CD4-positive, alpha-beta T cell (primary cell): ENCODE measurements at regions of chr22 and their contacts with region 1.

Region 1: DNA sequence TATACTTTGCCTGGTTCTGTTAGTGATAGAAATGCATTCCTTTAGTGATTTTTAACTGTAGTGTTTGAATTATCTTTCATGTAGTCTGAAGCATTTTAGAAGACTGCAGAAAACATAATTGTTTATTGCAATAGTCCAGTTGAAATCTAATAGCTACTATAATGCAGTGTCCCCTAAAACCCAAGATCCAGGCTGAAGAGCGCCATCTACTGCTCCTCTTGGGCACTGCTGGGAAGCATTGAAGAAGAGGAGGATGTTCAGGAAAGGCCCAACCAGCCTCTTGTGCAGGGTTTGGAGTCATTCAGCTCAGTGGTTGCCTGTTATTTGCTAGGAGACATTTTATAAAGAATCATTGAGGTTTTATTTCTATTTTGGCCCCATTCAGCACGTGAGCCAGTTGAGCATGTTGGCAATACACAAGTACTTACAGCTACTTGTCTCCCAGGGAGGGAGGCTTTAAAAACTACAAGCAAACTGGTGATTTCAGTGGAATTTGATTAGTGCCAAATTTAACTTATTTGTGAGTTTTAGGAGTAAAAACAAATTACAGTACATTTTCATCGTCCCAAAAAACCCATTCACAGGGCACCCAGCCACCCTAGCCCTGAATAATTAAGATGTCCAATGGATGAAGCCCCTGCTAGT is 74.9 kb upstream of the HORMAD2 start:
- DNase-seq: peak; percentile 29 to 73 (median 54)
- ATAC-seq: peak; percentile 72
- H3K4me3 ChIP-seq: no peak overlapping the region
- H3K4me3 Mint-ChIP-seq: no peak overlapping the region
- H3K27ac ChIP-seq: no peak overlapping the region
- H3K27ac Mint-ChIP-seq: peak overlapping the region; percentile 6
- H3K4me1 ChIP-seq: no peaks in the 10 kb centered on the region
- H3K4me1 Mint-ChIP-seq: peaks cover 8% of the 10 kb centered on the region
- H3K27me3 ChIP-seq: no peaks in the 10 kb centered on the region
- H3K27me3 Mint-ChIP-seq: no peaks in the 10 kb centered on the region
- CTCF ChIP-seq: peak; percentile 99

Region 2: GRCh38 chr22:29394931-29395581 is 610.3 kb before region 1 on chr22:
- CTCF ChIA-PET with region 1: no interaction called
- POLR2A ChIA-PET with region 1: no interaction called
- intact Hi-C with region 1: loop called (anchors 2 to 5 kb)
- DNase-seq: peak; percentile 44 to 85 (median 57)
- ATAC-seq: peak; percentile 100
- H3K4me3 ChIP-seq: no peak overlapping the region
- H3K4me3 Mint-ChIP-seq: peak overlapping the region; percentile 18
- H3K27ac ChIP-seq: no peak overlapping the region
- H3K27ac Mint-ChIP-seq: no peak overlapping the region
- H3K4me1 ChIP-seq: peaks cover 3% of the 10 kb centered on the region
- H3K4me1 Mint-ChIP-seq: peaks cover 10% of the 10 kb centered on the region
- H3K27me3 ChIP-seq: no peaks in the 10 kb centered on the region
- H3K27me3 Mint-ChIP-seq: no peaks in the 10 kb centered on the region
- CTCF ChIP-seq: peak; percentile 84

Region 3: DNA sequence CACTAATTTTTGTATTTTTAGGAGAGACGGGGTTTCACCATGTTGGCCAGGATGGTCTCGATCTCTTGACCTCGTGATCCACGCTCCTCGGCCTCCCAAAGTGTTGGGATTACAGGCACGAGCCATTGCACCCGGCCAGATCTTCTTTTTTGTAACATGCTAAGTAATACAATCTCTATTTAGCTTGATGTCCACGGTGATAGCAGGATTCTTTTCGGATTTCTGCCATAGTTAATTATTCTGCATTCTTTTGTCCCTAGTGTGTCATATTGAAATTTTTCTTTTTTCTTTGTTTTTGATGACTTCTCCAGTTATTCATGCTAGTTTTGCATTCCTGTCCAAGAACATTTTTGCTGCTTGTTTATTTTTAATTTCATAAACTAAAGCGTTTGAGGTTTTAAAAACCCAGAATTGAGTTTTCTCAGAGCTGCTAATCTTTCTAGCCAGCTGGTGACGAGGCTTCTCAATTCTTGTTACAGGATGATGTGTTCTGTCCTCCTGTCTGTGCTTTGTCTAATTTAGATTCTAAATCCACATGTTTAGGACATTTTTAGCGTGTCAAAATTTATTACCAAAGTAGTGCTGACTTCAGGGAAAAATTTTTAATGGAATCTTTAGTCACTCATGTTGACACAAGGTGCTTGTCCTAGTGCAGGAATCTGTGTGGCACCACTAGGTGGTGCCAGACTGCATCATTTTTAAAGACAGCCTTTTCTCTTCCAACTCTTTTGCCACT is 380.1 kb before region 1 on chr22:
- CTCF ChIA-PET with region 1: interaction called, 3 read pairs
- POLR2A ChIA-PET with region 1: no interaction called
- intact Hi-C with region 1: loop called in 1 of 2 experiments (anchors 1 kb)
- DNase-seq: peak in 8 of 14 experiments; percentile 9 to 73 (median 40)
- ATAC-seq: peak; percentile 51
- H3K4me3 ChIP-seq: no peak overlapping the region
- H3K4me3 Mint-ChIP-seq: no peak overlapping the region
- H3K27ac ChIP-seq: no peak overlapping the region
- H3K27ac Mint-ChIP-seq: peak overlapping the region; percentile 81
- H3K4me1 ChIP-seq: peaks cover 28% of the 10 kb centered on the region
- H3K4me1 Mint-ChIP-seq: peaks cover 76% of the 10 kb centered on the region
- H3K27me3 ChIP-seq: no peaks in the 10 kb centered on the region
- H3K27me3 Mint-ChIP-seq: no peaks in the 10 kb centered on the region
- CTCF ChIP-seq: peak; percentile 93

Region 4: GRCh38 chr22:29689880-29690213 is 315.5 kb before region 1 on chr22:
- CTCF ChIA-PET with region 1: interaction called, 7 read pairs
- POLR2A ChIA-PET with region 1: no interaction called
- intact Hi-C with region 1: loop called in 1 of 2 experiments (anchors 5 kb)
- DNase-seq: peak in 13 of 14 experiments; percentile 14 to 49 (median 33)
- ATAC-seq: no peak
- H3K4me3 ChIP-seq: no peak overlapping the region
- H3K4me3 Mint-ChIP-seq: no peak overlapping the region
- H3K27ac ChIP-seq: no peak overlapping the region
- H3K27ac Mint-ChIP-seq: no peak overlapping the region
- H3K4me1 ChIP-seq: no peaks in the 10 kb centered on the region
- H3K4me1 Mint-ChIP-seq: no peaks in the 10 kb centered on the region
- H3K27me3 ChIP-seq: no peaks in the 10 kb centered on the region
- H3K27me3 Mint-ChIP-seq: no peaks in the 10 kb centered on the region
- CTCF ChIP-seq: peak; percentile 45

Region 5: DNA sequence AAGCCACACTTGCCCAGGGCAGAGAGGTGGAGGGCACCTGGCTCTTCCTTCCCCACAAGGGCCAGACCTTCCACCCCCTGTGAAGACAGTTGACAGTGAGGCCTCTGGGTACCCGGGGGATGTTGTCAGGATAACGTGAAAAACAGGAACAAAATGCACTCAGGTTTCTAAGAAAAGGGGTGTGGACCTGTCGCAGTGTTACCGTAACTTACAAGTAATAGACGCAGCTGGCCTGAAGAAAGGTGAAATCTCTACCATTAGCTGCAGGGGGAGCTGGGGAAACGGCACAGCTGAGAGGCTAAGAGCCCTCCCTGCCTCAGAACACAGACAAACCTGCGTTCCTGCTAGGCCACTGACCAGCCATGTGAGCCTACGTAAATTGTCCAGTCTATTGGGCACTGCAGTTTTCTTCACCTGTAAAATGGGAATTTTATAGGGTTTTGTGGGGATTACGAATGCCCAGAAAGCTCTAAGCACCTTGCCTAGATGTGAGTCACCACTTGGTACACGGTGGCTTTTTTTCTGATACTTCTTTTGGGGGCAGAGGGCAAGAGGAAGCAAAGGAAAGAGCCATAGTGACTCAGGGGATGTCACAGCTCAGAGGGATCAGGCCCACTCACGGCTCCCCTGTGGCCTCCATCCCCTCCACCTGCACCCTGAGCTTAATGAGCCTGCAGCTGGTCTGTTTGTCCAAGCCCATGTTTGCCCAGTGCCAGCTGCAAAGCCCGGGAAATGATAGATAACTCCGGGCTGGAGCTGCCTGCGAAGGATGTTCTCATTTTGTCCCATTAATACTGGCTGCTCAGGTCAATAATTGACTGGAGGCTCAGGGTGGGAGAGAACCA is 304.0 kb before region 1 on chr22:
- CTCF ChIA-PET with region 1: no interaction called
- POLR2A ChIA-PET with region 1: no interaction called
- intact Hi-C with region 1: no loop called
- DNase-seq: peak in 6 of 14 experiments; percentile 5 to 45 (median 34)
- ATAC-seq: peak; percentile 76
- H3K4me3 ChIP-seq: no peak overlapping the region
- H3K4me3 Mint-ChIP-seq: no peak overlapping the region
- H3K27ac ChIP-seq: no peak overlapping the region
- H3K27ac Mint-ChIP-seq: no peak overlapping the region
- H3K4me1 ChIP-seq: peaks cover 21% of the 10 kb centered on the region
- H3K4me1 Mint-ChIP-seq: peaks cover 15% of the 10 kb centered on the region
- H3K27me3 ChIP-seq: peaks cover 0 to 8% of the 10 kb centered on the region in 2 experiments
- H3K27me3 Mint-ChIP-seq: peaks cover 8% of the 10 kb centered on the region
- CTCF ChIP-seq: no peak

Region 6: GRCh38 chr22:29994027-29994715 is 11.2 kb before region 1 on chr22:
- CTCF ChIA-PET with region 1: interaction called, 23 read pairs
- POLR2A ChIA-PET with region 1: no interaction called
- intact Hi-C with region 1: no loop called
- DNase-seq: no peak
- ATAC-seq: peak; percentile 24
- H3K4me3 ChIP-seq: no peak overlapping the region
- H3K4me3 Mint-ChIP-seq: no peak overlapping the region
- H3K27ac ChIP-seq: no peak overlapping the region
- H3K27ac Mint-ChIP-seq: peak overlapping the region; percentile 64
- H3K4me1 ChIP-seq: no peaks in the 10 kb centered on the region
- H3K4me1 Mint-ChIP-seq: peaks cover 4% of the 10 kb centered on the region
- H3K27me3 ChIP-seq: no peaks in the 10 kb centered on the region
- H3K27me3 Mint-ChIP-seq: no peaks in the 10 kb centered on the region
- CTCF ChIP-seq: no peak

Region 7: GRCh38 chr22:30314915-30315314 is 309.6 kb after region 1 on chr22:
- CTCF ChIA-PET with region 1: no interaction called
- POLR2A ChIA-PET with region 1: no interaction called
- intact Hi-C with region 1: no loop called
- DNase-seq: peak in 6 of 14 experiments; percentile 29 to 85 (median 58)
- ATAC-seq: peak; percentile 59
- H3K4me3 ChIP-seq: no peak overlapping the region
- H3K4me3 Mint-ChIP-seq: peak overlapping the region; percentile 47
- H3K27ac ChIP-seq: peak overlapping the region; percentile 51 to 69
- H3K27ac Mint-ChIP-seq: peak overlapping the region; percentile 84
- H3K4me1 ChIP-seq: peaks cover 99% of the 10 kb centered on the region
- H3K4me1 Mint-ChIP-seq: peaks cover 96% of the 10 kb centered on the region
- H3K27me3 ChIP-seq: no peaks in the 10 kb centered on the region
- H3K27me3 Mint-ChIP-seq: no peaks in the 10 kb centered on the region
- CTCF ChIP-seq: no peak